ENCODE measurements at regions of chr6 and their contacts with region 1.

Region 1: GRCh38 chr6:17086469-17086868 is 15.4 kb upstream of the STMND1 start:
- DNase-seq: peak; percentile 24
- H3K4me3 ChIP-seq: no peak overlapping the region
- CTCF ChIP-seq: peak; percentile 57

Region 2: GRCh38 chr6:17045581-17046326 is 40.7 kb before region 1 on chr6:
- CTCF ChIA-PET with region 1: interaction called, 10 read pairs
- POLR2A ChIA-PET with region 1: no interaction called
- DNase-seq: peak; percentile 88
- H3K4me3 ChIP-seq: no peak overlapping the region; the same call in 1 of the 2 replicates
- CTCF ChIP-seq: no peak

Region 3: GRCh38 chr6:17101422-17102257 is 15.2 kb after region 1 on chr6 and contains the start of gene STMND1:
- CTCF ChIA-PET with region 1: interaction called, 66 read pairs
- POLR2A ChIA-PET with region 1: no interaction called
- DNase-seq: no peak
- H3K4me3 ChIP-seq: peak within 1 kb of the TSS; percentile 48
- CTCF ChIP-seq: no peak

Region 4: GRCh38 chr6:17156112-17156921 is 69.8 kb after region 1 on chr6:
- CTCF ChIA-PET with region 1: no interaction called
- POLR2A ChIA-PET with region 1: no interaction called
- DNase-seq: peak; percentile 64
- H3K4me3 ChIP-seq: no peak overlapping the region
- CTCF ChIP-seq: peak; percentile 66